Activated T-helper 1 cell treated with anti-CD3 and anti-CD28 coated beads, Interleukin-12 subunit alpha, Interleukin-12 subunit beta, Interleukin-2, Interleukin-4 antibody, amounts not matched to agents 30 ng/mL and 10 ng/mL and 1 ng/mL, durations not matched to agents 14 hours and 24 hours and 36 hours (primary cell): ENCODE measurements at regions of chr18 and their contacts with region 1.

Region 1: DNA sequence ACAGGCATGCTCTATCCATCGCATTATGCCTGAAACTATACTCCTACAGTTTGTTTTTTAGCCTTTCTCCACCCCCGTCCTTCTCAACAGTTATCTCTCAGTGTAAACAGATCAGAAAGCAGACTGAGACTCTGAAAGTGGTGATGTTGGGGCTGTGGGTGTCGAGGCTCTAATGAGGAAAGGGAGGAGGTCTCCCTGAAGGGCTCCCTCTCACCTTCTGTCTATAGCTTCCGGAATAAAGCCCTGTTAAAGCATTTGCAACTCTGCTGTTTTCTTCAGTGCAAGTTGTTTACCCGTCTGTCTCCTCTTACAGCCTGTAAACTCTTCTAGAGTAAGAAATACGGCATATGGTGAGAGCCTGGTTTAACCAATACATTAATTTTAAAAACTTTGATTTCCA is 136.7 kb upstream of the SYT4 start:
- DNase-seq: no peak
- H3K4me3 Mint-ChIP-seq: no peak overlapping the region
- H3K27ac Mint-ChIP-seq: no peak overlapping the region
- H3K4me1 Mint-ChIP-seq: no peaks in the 10 kb centered on the region
- H3K27me3 Mint-ChIP-seq: no peaks in the 10 kb centered on the region

Region 2: GRCh38 chr18:41499345-41499744 is 1914.7 kb before region 1 on chr18:
- intact Hi-C with region 1: loop called (anchors 5 kb)
- DNase-seq: no peak
- H3K4me3 Mint-ChIP-seq: no peak overlapping the region
- H3K27ac Mint-ChIP-seq: no peak overlapping the region
- H3K4me1 Mint-ChIP-seq: no peaks in the 10 kb centered on the region
- H3K27me3 Mint-ChIP-seq: no peaks in the 10 kb centered on the region

Region 3: GRCh38 chr18:43571078-43571689 is 157.2 kb after region 1 on chr18:
- intact Hi-C with region 1: no loop called
- DNase-seq: no peak
- H3K4me3 Mint-ChIP-seq: no peak overlapping the region
- H3K27ac Mint-ChIP-seq: no peak overlapping the region
- H3K4me1 Mint-ChIP-seq: no peaks in the 10 kb centered on the region
- H3K27me3 Mint-ChIP-seq: peaks cover 3% of the 10 kb centered on the region